ENCODE measurements at regions of chr1 and their contacts with region 1.

Region 1: DNA sequence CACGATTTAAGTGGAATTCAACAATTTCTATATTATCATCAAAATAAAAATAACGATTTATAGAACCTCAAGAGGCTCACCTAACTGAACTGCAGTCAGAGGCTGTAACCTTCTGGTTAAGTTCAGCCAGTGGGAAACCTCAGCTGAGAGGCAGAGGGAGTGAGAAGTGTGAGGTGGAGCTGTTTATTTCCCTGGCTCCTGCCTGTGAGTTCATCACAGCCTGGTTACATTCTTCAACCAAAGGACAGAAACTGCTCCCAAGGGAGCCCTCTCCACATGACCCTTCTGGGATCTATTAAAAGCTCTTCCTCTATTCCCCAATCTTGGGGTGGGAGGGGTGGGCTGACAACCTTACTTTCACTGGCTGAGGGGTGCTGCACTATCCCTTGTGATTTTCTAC is 22.2 kb downstream of the DYNLT5 start:
- DNase-seq: no peak
- H3K4me3 ChIP-seq: no peak overlapping the region
- H3K27ac ChIP-seq: no peak overlapping the region
- H3K4me1 ChIP-seq: no peaks in the 10 kb centered on the region
- H3K27me3 ChIP-seq: no peaks in the 10 kb centered on the region
- CTCF ChIP-seq: no peak

Region 2: DNA sequence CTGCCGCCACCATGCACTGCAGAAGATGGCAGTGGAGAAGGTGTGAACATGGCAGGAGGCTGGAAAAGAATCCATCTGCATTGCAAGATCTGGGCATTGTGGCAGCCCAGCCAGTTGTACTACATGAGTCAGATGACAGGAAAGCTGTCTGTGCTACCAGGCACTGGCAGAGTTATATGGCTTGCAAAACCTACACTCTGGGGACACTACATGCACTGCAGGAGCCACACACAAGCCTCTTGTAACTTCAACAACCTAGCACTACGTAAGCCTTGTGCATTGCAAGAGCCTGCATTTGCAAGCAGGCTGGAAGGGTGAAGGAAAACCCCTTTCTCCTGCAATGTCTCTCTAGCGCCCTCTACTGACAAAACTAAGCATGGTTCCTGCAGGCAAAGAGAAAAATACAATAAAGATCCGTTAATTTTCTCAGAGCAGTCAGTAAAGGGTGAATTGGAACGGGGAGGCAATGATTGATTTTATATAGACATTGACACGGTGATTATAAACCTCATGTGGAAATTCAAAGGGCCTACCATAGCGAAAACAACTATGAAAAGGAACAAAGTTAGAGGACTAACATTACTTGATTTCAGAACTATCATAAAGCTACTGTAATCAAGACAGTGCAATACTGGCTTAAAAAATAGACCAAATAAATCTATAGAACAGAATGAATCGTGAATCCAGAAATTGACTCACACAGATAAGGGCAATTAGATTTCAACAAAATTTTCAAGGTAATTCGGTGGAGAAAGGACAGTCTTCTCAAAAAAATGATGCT is 48.4 kb before region 1 on chr1:
- CTCF ChIA-PET with region 1: no interaction called
- POLR2A ChIA-PET with region 1: no interaction called
- intact Hi-C with region 1: no loop called
- DNase-seq: peak; percentile 41 to 42
- H3K4me3 ChIP-seq: no peak overlapping the region
- H3K27ac ChIP-seq: no peak overlapping the region
- H3K4me1 ChIP-seq: no peaks in the 10 kb centered on the region
- H3K27me3 ChIP-seq: no peaks in the 10 kb centered on the region
- CTCF ChIP-seq: peak; percentile 96

Region 3: GRCh38 chr1:66916320-66916719 is 141.9 kb after region 1 on chr1:
- CTCF ChIA-PET with region 1: no interaction called
- POLR2A ChIA-PET with region 1: interaction called, 11 read pairs
- intact Hi-C with region 1: no loop called
- DNase-seq: no peak
- H3K4me3 ChIP-seq: no peak overlapping the region
- H3K27ac ChIP-seq: no peak overlapping the region
- H3K4me1 ChIP-seq: no peaks in the 10 kb centered on the region
- H3K27me3 ChIP-seq: no peaks in the 10 kb centered on the region
- CTCF ChIP-seq: no peak

Region 4: DNA sequence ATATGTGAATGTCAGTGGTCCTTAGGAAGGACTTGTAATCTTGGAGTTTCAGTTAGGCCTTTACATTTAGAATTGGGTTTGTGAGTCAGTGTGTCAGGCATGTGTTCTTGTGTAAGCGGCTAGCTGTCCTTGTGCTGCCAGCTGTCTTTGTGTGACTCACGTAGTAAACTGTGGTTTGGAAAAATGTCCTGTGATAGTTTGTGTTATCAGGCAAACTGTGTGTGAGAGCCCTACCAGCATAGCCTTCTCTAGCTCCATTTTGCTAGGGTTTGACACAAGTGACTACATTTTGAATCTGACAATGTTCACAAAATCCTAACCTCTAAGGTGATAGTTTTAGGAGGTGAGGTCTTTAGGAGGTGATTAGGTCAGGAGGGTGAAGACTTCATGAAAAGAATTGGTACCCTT is 286.4 kb after region 1 on chr1:
- CTCF ChIA-PET with region 1: no interaction called
- POLR2A ChIA-PET with region 1: no interaction called
- intact Hi-C with region 1: no loop called
- DNase-seq: peak; percentile 37 to 91
- H3K4me3 ChIP-seq: no peak overlapping the region
- H3K27ac ChIP-seq: no peak overlapping the region
- H3K4me1 ChIP-seq: peaks cover 12% of the 10 kb centered on the region
- H3K27me3 ChIP-seq: no peaks in the 10 kb centered on the region
- CTCF ChIP-seq: no peak

Measured in PC-9 (cell line).